ENCODE measurements at regions of chr12 and their contacts with region 1.

Region 1: DNA sequence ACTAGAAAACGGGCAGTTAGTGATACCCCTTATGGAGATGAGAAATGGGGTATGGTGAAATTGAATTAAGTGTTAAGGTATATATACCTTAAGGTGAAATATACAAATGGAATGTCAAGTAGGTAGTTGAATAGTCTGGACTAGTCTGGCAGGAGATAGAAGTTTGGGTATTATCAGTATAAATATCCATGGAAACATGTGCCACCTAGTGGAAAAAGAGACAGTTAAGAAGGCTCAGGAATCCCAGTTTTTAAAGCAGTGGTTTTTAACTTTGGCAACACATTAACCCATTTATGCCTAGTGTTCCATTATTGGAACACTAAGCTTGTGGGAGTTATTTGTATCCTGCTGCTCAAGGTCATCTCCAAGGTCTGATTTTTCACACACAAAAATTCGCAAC is 38.6 kb upstream of the TPH2 start:
- DNase-seq: no peak
- H3K4me3 ChIP-seq: no peak overlapping the region
- H3K4me3 Mint-ChIP-seq: no peak overlapping the region
- H3K27ac ChIP-seq: no peak overlapping the region
- H3K27ac Mint-ChIP-seq: no peak overlapping the region
- H3K4me1 ChIP-seq: peaks cover 4% of the 10 kb centered on the region
- H3K4me1 Mint-ChIP-seq: peaks cover 0 to 16% (median 9%) of the 10 kb centered on the region in 4 donors
- H3K27me3 ChIP-seq: no peaks in the 10 kb centered on the region
- H3K27me3 Mint-ChIP-seq: no peaks in the 10 kb centered on the region

Region 2: GRCh38 chr12:71865166-71865713 is 34.9 kb before region 1 on chr12:
- CTCF ChIA-PET with region 1: no interaction called
- POLR2A ChIA-PET with region 1: no interaction called
- intact Hi-C with region 1: loop called (anchors 5 kb)
- DNase-seq: no peak
- H3K4me3 ChIP-seq: no peak overlapping the region
- H3K4me3 Mint-ChIP-seq: peak overlapping the region in 2 of 8 donors; percentile 5 to 59
- H3K27ac ChIP-seq: no peak overlapping the region
- H3K27ac Mint-ChIP-seq: peak overlapping the region in 3 of 7 donors; percentile 56 to 84 (median 65)
- H3K4me1 ChIP-seq: peaks cover 34% of the 10 kb centered on the region
- H3K4me1 Mint-ChIP-seq: peaks cover 43 to 69% (median 56%) of the 10 kb centered on the region in 4 donors
- H3K27me3 ChIP-seq: no peaks in the 10 kb centered on the region
- H3K27me3 Mint-ChIP-seq: no peaks in the 10 kb centered on the region

Measured in CD4-positive, alpha-beta memory T cell (primary cell).